Posterior vena cava (tissue), 2 donors: ENCODE measurements at regions of chr4 and their contacts with region 1.

Region 1: DNA sequence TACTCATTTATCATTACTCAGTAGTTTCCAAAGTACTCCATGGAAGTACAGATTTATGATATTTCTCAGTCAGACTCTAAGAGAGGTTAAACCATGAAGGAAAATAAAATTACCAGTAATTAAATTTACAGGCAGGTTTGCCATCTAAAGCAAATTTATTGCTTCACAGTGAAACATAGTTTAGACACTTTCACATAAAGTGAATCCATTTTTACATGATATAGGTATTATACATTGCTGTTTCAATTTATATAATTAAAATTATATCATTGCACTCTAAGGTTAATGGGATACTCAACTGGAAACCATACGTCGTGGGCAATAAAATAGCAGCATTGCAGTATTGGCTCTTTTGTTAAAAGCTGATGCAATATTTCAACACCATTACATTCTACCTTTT is 202.8 kb downstream of the SLIT2 start:
- DNase-seq: no peak

Region 2: DNA sequence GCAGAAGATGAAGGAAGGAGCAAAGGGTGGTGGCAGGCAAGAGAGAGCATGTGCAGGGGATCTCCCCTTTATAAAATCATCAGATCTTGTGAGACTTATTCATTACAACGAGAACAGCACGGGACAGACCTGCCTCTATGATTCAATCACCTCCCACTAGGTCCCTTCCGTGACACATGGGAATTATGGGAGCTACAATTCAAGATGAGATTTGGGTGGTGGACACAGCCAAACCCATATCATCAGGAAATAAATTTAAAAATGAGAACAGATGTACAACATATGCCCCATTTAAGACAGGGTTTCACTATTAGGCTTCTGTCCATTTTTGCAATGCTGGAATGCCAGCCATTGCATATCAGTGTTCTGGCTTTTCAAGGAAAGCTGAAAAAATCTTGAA is 549.5 kb before region 1 on chr4:
- intact Hi-C with region 1: loop called in 1 of 2 experiments (anchors 5 kb)
- DNase-seq: no peak

Region 3: DNA sequence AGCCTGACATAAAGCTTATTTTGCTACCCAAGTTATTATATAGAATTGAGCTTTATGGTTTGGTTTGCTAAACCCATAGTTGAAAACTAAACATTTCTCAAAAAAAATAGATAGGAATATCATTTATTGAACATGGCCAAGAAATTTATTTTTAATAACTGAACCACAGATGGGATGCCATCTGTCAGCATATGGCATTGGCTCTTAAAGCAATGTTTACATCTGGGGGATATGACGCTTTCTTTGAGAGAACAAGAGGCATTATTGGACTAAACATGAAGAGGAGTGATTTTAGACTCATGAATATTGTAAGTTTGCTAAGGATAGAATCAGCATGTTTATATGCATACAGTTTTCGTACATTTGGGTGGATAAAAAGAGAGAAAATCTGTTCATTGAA is 335.4 kb before region 1 on chr4:
- intact Hi-C with region 1: no loop called
- DNase-seq: no peak

Region 4: DNA sequence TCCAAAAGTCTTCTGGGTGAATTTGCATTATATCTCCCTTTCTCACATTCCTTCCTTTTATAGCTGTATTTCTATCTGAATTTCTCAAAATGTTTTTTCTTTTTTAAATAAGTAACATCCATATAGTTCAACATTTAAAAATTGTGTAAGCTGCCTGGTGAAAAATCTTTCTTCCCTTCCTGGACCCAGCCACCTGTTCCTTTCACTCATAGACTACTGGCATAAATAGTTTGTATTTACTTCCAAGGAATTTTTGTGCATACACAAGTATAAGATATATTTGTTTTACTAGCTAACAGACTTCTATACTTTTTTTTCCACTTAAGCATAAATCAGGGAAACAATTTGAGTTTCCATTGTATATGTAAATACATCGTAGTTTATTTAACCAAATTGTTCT is 281.4 kb after region 1 on chr4:
- intact Hi-C with region 1: no loop called
- DNase-seq: no peak